Mammary epithelial cell (primary cell): ENCODE measurements at regions of chr3 and their contacts with region 1.

Region 1: DNA sequence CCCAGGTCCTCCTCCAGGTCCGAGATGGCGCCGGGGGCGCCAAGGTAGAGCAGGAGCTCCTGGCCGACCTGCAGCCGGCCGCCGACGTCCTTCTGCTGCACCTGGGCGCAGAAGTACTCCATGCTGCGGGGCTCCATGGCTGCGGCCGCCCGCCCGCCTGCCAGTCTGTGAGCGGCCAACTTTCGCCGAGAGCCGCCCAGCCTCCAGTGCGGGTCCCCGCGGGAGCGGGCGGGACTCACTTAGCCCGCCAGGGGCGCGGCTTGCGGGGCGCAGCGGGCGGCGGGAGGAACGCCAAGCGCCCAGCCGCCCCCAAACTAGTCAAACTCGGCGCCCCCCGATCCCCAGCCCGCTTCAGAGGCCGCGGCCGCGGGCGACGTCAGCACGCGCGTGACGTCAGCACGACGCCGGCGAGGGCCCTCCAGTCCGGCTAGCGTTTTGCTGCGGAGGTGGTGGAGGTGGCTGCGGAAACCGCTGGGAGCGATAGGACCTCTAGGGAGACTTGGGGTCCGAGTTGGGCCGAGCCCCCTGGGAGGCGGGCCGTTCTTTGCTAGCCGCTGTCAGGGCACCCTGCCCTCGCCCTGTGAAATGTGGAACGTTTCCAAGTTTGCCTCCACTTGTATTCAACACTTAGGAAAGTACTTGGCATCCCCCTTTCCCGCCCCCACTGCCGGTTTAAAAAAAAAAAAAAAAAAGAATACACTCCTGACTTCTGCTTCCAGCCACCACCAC is at the start of gene CLASP2:
- DNase-seq: peak; percentile 81
- H3K4me3 ChIP-seq: peak within 1 kb of the TSS; percentile 86 to 97 (median 91)
- H3K27ac ChIP-seq: peak within 1 kb of the TSS; percentile 85
- H3K4me1 ChIP-seq: peaks cover 13% of the 10 kb centered on the region
- H3K27me3 ChIP-seq: no peaks in the 10 kb centered on the region
- CTCF ChIP-seq: no peak
- total RNA-seq, gene CLASP2: 50.7 to 54.8 TPM

Region 2: GRCh38 chr3:33256249-33256648 is 461.8 kb before region 1 on chr3:
- CTCF ChIA-PET with region 1: no interaction called
- dilution Hi-C with region 1: no loop called
- in situ Hi-C with region 1: no loop called
- intact Hi-C with region 1: no loop called
- DNase-seq: no peak
- H3K4me3 ChIP-seq: no peak overlapping the region
- H3K27ac ChIP-seq: no peak overlapping the region
- H3K4me1 ChIP-seq: no peaks in the 10 kb centered on the region
- H3K27me3 ChIP-seq: no peaks in the 10 kb centered on the region
- CTCF ChIP-seq: no peak

Region 3: DNA sequence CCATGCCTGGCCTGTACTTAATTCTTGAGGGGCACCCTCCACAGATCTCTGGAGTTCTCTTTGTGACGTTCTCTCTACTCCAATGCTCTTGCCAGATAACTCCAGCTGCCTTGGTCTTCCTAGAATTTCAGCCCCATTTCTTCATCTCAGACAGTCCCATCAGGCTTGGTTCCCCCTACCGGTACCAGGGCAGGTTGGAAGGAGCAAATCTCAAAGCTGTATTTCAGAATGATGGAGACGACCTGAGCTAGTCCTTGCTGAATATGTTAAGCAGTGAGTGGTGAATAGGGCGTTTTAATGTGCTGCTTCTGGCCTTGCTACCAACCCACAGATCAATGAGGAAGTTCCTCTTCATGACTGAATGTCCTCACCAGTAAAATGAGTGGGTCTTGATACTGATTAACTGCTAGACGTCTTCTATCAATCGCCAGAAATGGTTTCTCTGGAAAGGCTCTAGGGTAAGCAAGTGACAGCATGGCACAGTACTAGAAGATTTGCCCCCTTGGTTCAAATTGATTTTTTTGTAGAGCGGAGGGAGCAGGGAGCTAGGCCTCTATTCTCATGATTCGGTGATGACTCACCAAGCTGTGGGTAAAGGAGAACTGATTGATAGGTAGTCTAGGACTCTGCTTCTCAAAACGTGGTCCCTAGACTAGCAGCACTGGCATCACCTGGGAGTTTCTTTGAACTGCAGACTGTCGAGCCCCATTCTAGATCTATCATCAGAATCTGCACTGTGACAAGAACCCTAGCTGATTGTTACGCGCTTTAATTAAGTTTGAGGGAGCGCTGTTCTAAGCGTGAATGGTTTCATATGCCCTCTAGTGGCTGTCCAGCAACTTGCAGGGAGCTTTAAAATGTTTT is 345.6 kb before region 1 on chr3:
- CTCF ChIA-PET with region 1: no interaction called
- dilution Hi-C with region 1: no loop called
- in situ Hi-C with region 1: no loop called
- intact Hi-C with region 1: loop called (anchors 10 kb)
- DNase-seq: peak; percentile 78
- H3K4me3 ChIP-seq: no peak overlapping the region
- H3K27ac ChIP-seq: peak overlapping the region; percentile 13
- H3K4me1 ChIP-seq: peaks cover 10% of the 10 kb centered on the region
- H3K27me3 ChIP-seq: no peaks in the 10 kb centered on the region
- CTCF ChIP-seq: peak; percentile 84 to 97

Region 4: DNA sequence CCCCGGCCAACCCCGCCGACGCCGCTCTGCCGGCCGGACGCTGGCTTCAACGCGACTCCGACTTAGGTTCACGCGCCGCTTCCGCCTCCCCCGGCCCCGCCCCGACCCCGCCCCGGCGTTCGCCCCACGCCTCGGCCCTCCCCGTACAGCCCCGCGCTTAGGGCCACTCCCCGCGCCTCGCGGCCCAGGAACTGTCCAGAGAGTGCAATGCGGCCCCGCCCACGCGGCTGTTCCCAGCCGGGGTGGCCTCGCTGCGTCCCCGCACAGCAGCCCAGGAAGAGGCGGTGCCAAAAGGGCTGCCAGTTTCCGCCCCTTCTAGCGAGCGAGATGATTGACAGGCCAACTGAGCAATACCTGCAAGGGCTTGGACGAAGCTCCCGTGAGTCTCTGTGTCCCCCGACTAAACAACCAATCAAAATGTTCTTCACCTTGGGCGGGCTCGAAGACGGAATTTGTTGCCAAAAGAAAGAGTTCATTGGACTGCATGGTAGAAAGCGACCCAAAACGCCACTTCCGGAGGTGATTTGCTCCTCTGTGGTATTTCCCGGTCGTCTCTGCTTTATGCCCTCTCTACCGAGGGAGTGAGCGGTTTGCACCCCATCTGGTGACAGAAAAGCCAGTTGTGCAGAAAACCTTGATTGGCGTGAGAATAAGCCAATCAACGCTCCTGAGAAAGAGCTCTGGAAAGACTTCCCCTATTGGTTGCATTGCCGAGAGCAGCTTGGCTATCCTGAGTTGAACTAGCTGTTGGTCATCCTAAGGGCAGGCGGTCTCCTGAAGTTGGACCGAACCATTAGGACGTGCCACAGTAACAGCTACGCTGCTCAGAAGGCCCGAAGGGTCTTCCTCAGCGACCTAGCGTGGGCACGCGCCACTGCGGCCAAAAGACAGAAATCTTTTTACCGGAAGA is 277.5 kb before region 1 on chr3 and contains the start of gene UBP1:
- CTCF ChIA-PET with region 1: no interaction called
- dilution Hi-C with region 1: no loop called
- in situ Hi-C with region 1: no loop called
- intact Hi-C with region 1: loop called (anchors 5 kb)
- DNase-seq: peak; percentile 100
- H3K4me3 ChIP-seq: peak within 1 kb of the TSS; percentile 86 to 93 (median 88)
- H3K27ac ChIP-seq: peak within 1 kb of the TSS; percentile 83
- H3K4me1 ChIP-seq: peaks cover 19% of the 10 kb centered on the region
- H3K27me3 ChIP-seq: no peaks in the 10 kb centered on the region
- CTCF ChIP-seq: no peak
- total RNA-seq, gene UBP1: 44.8 to 63.7 TPM

Region 5: DNA sequence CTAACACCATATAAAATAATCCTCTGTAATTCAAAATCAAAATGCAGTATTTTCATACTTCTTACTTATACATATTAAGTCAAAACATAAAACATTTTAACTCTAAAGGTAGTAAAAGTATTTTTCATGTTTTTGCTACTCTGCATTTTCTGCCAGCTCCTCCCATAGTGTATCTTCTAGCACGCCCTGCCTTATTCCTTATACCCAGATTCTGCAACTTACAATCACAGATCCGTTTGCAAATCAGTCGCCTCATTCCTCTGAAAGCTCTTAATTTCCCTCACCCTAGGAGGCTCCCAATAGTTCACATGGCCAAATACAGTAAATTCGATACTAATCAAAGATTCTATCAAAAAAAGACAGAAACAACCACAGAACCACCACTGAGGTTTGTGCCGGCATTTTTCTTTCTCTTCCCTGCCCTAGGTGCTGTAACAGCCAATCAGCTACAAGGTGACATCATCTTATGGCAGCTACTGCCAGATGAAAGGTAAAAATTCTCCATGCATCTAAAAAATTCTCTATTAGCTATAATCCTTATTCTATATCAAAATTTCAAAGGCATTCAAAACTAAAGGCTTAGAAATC is 72.9 kb before region 1 on chr3:
- CTCF ChIA-PET with region 1: no interaction called
- dilution Hi-C with region 1: no loop called
- in situ Hi-C with region 1: no loop called
- intact Hi-C with region 1: loop called (anchors 2 kb)
- DNase-seq: peak; percentile 55
- H3K4me3 ChIP-seq: peak overlapping the region; percentile 57 to 77 (median 65)
- H3K27ac ChIP-seq: peak overlapping the region; percentile 55
- H3K4me1 ChIP-seq: no peaks in the 10 kb centered on the region
- H3K27me3 ChIP-seq: no peaks in the 10 kb centered on the region
- CTCF ChIP-seq: no peak

Region 6: GRCh38 chr3:33773637-33774036 is 55.6 kb after region 1 on chr3:
- CTCF ChIA-PET with region 1: no interaction called
- dilution Hi-C with region 1: no loop called
- in situ Hi-C with region 1: no loop called
- intact Hi-C with region 1: loop called (anchors 1 kb)
- DNase-seq: no peak
- H3K4me3 ChIP-seq: no peak overlapping the region
- H3K27ac ChIP-seq: no peak overlapping the region
- H3K4me1 ChIP-seq: peaks cover 12% of the 10 kb centered on the region
- H3K27me3 ChIP-seq: no peaks in the 10 kb centered on the region
- CTCF ChIP-seq: no peak